Left cardiac atrium (tissue), 4 donors: ENCODE measurements at regions of chr13 and their contacts with region 1.

Region 1: GRCh38 chr13:78978381-78978998 is 319.5 kb upstream of the OBI1 start:
- DNase-seq: no peak
- ATAC-seq: peak; percentile 53 to 57

Region 2: DNA sequence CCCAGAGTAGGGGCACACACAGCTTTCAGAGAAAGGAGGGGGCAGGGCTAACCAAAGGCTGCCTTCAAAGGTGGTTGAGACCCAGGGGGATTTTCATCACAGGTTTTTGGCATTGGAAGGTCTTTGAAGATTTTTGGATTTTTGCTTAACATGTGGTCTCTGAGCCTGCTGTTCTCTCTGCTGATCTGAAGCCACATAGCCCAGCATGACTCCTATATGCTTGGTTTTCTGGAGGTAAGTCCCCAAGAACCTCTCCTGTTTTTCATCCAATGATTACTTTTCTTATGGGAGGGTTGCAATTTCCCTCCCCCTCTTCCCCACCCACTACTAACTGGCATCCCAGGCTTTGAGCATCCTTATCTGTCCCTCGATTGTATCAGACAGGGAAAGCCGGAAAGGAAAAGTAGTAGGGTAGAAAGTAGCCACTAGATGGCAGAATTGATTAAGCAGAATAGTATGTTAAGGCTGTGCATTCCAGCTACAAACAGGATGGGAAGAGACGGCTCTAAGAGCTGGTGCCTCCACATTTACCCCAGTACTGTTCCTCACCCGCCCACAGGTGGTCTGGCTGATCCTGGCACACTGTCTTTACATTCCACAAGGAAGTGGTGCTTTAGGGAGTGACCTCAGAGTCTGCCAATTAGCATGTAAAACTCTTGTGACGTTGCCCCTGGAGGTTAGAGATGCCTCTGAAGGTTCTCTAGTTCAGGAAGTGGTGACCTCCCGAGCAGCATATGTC is 840.9 kb before region 1 on chr13:
- intact Hi-C with region 1: loop called (anchors 2 to 10 kb)
- DNase-seq: no peak
- ATAC-seq: peak; percentile 79 to 88

Region 3: DNA sequence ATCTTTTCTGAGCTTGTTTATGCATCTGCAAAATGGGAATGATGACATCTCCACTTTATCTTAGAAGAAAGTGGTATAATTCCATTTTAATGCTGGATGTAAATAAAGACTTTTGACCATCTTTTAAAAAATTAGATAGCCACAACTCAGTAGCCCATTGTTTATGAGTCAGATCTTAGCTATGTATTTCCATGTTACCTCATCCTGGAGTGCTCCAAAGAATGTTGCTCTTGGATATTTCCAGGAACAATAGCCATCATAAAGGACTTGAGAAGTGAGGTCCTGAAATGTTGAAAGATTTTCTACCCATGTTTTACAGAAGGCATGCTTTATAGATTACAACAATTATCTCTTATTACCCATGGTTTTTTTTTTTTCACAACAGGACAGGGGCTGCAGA is 830.6 kb before region 1 on chr13:
- intact Hi-C with region 1: loop called in 1 of 2 experiments (anchors 10 kb)
- DNase-seq: no peak
- ATAC-seq: no peak

Region 4: DNA sequence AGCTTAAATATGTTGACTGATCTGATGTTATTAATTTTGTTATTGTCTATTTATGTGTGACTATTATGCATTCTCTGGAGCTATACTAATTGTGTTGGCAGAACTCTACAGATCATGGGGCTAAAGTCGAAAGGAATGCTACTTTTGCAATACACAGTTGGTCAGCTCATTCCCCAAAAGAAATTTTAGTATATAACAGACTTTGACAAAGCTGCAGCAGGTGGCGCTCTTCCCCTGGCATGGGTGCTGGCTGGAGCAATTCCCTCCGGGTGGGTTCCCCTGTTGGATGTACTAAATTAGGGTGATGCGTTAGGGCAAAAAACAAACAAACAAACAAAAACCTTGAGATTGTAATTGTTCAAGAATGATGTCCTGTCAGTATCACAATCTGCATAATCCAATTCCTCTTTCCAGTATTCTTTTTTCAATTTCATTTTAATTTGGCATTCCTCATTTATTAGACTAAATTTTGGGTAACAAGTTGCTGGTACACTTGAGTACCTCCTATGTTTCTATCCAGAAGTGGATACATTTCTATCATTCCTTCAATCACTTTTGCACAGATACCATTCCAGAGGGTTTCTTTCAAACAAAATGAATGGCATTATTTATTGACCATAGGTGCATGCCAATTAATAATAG is 737.1 kb before region 1 on chr13:
- intact Hi-C with region 1: loop called (anchors 2 to 5 kb)
- DNase-seq: peak; percentile 18
- ATAC-seq: no peak

Region 5: DNA sequence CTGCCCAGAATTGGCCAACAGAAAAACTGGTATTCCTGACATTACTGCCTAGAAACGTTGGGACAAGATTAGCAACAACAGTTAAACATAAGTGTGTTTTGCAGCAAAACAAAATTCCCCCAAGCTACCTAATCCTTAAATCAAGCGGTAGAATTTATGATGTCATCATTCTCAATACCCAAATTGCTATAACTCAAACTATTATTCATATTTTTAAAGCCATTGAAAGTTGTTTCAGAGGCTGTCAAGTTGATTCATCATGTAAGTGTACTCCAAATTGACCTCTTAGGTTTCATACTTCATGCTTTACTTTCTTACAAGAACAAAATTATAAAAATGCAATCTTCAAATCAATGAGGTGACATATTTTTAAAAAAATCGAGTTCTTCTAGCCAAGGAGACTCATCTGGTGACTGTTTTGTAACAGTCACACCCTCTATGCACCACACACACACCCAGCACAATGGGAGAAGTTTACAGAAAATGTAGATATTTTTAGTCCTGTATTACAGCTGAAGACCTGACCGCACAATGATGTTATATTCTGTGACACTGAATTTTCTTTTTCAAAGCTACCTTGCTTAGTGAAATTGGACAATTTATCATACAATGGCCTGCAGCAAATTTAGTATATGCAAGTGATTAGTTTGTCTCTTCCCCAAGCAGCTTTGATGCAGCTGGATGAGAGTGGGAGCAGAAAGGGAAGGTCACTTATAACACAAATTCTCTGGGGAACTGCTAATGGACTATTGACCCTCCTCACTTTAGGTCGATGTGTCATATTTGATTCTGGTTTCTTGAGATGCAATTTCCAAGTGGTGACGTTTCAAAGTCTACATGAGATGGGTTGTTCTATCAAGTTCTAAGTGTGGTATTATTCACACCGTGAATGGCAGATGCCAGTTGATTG is 25.8 kb after region 1 on chr13:
- intact Hi-C with region 1: no loop called
- DNase-seq: no peak
- ATAC-seq: no peak